ENCODE measurements at regions of chr11 and their contacts with region 1.

Region 1: GRCh38 chr11:125605417-125605816 is 12.8 kb downstream of the STT3A start:
- DNase-seq: no peak
- H3K4me3 ChIP-seq: no peak overlapping the region
- H3K27ac ChIP-seq: no peak overlapping the region
- H3K4me1 ChIP-seq: no peaks in the 10 kb centered on the region
- H3K27me3 ChIP-seq: no peaks in the 10 kb centered on the region
- CTCF ChIP-seq: no peak
- POLR2A ChIP-seq: no peak

Region 2: GRCh38 chr11:125663910-125664309 is 58.5 kb after region 1 on chr11:
- CTCF ChIA-PET with region 1: no interaction called
- POLR2A ChIA-PET with region 1: no interaction called
- dilution Hi-C with region 1: no loop called
- intact Hi-C with region 1: loop called (anchors 2 kb)
- DNase-seq: no peak
- H3K4me3 ChIP-seq: no peak overlapping the region
- H3K27ac ChIP-seq: no peak overlapping the region
- H3K4me1 ChIP-seq: no peaks in the 10 kb centered on the region
- H3K27me3 ChIP-seq: no peaks in the 10 kb centered on the region
- CTCF ChIP-seq: no peak
- POLR2A ChIP-seq: no peak